Kidney (tissue), 22 donors: ENCODE measurements at regions of chr15 and their contacts with region 1.

Region 1: GRCh38 chr15:51771773-51772172 is 20.4 kb downstream of the TMOD2 start:
- DNase-seq: no peak
- H3K4me3 ChIP-seq: no peak overlapping the region
- H3K27ac ChIP-seq: no peak overlapping the region
- H3K4me1 ChIP-seq: no peaks in the 10 kb centered on the region
- H3K27me3 ChIP-seq: no peaks in the 10 kb centered on the region
- CTCF ChIP-seq: no peak

Region 2: DNA sequence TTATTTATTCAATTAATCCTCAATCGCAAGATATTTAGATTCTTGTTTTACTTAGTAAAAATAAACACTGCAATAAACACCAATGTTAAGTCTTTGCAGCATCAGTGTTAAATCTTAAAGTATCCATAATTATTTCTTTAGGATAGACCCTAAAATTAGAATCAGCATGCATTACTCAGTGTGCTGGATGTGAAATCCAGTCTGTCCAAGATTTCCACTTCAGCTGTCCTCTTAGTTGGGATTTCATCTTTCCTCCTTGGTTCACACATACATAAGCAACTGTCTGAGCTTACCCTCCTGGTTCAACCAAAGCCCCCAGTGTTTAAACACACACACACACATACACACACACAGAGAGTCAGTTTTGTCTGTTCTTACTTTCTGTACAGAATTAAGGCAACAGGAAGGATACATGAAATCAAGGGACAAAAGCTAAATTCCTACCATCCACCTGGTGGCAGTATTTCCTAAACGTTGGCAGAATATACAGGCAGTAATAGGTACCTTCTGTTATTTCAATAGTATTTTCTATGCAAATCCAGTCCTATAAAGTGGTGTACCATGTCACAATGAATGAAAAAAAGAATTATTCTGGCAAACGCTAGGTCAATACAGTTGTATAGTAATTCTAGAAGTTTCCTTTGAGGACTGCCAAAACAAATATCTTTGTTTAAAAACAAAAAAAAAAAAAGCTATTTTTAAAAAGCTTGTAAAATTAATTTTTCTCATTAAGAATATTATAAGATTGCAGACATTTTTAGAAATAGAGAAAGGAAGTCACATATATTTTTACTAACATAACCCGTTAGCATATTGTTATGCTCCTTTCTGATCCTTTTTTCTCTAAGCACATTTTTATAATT is 121.9 kb before region 1 on chr15:
- intact Hi-C with region 1: loop called (anchors 5 kb)
- DNase-seq: peak in 3 of 5 donors; percentile 48 to 89 (median 79)
- H3K4me3 ChIP-seq: no peak overlapping the region
- H3K27ac ChIP-seq: no peak overlapping the region
- H3K4me1 ChIP-seq: no peaks in the 10 kb centered on the region
- H3K27me3 ChIP-seq: no peaks in the 10 kb centered on the region
- CTCF ChIP-seq: peak; percentile 86

Region 3: DNA sequence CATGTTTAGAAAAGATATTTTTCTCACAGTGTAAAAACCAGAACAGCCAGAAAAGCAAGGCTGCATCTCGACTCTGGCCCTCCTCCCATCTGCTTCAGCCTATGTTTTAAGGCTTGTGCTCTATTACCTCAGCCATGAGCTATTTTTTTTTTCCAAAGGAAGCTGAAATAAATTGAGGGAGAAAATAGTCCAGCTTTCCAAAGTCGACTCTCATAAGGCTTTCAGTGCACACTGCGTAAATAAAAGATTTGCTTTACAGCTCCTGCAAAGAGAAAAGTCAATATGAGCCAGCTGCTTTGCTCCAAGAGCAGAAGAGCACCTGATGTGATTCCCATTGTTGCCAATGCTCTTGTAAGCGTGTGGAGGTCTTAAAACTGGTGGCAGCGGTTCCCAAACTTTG is 63.8 kb before region 1 on chr15:
- intact Hi-C with region 1: no loop called
- DNase-seq: peak in 1 of 5 donors; percentile 20
- H3K4me3 ChIP-seq: no peak overlapping the region
- H3K27ac ChIP-seq: no peak overlapping the region
- H3K4me1 ChIP-seq: no peaks in the 10 kb centered on the region
- H3K27me3 ChIP-seq: no peaks in the 10 kb centered on the region
- CTCF ChIP-seq: no peak

Region 4: GRCh38 chr15:52186651-52187486 is 415.1 kb after region 1 on chr15:
- intact Hi-C with region 1: no loop called
- DNase-seq: no peak
- H3K4me3 ChIP-seq: no peak overlapping the region
- H3K27ac ChIP-seq: no peak overlapping the region
- H3K4me1 ChIP-seq: no peaks in the 10 kb centered on the region
- H3K27me3 ChIP-seq: no peaks in the 10 kb centered on the region
- CTCF ChIP-seq: no peak